ENCODE measurements at regions of chr12 and their contacts with region 1.

Region 1: DNA sequence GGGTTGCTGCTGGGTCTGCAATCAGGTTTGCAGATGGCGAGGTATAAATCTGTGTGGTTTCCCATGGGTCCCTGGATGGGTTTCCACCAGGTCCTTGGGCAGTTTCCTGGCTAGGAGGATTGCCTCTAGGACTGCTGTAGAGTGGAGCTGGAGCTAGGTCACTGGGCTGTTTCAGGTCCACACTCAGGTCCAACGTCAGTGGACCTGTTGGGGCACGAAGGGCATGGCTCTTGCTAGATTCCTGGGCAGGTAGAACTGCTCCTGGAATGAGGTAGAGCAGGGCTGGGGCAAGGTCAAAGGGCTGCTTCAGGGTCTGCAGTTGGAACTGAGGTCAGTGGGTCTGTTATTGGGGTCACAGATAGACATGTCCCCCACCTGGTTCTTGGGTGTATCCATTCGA is 317.7 kb downstream of the ETNK1 start:
- DNase-seq: no peak
- H3K4me3 ChIP-seq: no peak overlapping the region
- H3K4me3 Mint-ChIP-seq: no peak overlapping the region
- H3K27ac Mint-ChIP-seq: no peak overlapping the region
- H3K4me1 ChIP-seq: no peaks in the 10 kb centered on the region
- H3K4me1 Mint-ChIP-seq: no peaks in the 10 kb centered on the region
- H3K27me3 ChIP-seq: no peaks in the 10 kb centered on the region
- H3K27me3 Mint-ChIP-seq: peaks cover 6% of the 10 kb centered on the region
- CTCF ChIP-seq: no peak

Region 2: DNA sequence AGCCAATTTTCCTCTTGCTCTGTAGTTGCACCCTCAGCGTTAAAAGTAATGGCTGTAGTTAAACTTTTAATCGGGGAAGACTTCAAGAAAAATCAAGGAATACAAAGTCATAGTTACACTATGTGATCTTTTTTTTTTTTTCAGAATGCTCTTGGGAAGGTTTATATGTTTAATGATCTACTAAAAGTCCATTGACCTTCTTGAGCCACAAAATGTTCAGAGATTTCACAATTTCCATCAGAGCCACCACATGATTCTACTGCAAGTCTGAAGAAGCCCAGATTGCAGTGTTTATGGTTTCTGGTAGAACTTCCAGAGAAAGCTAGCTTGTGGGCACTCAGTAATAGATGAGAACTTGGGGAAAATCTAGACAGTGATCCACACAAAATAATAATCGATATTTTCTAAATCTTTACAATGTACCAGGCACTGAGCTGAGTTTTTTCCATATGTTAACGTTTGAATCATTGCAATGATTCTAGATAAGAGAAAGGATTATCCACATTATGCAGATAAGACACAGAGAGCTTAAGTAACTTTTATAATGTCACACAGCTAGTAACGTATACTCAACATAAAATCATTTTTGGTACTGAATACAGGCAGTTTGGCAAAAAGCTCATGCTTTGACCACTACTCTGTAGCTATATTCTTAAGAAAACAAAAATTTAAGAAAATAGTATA is 1376.3 kb before region 1 on chr12:
- CTCF ChIA-PET with region 1: no interaction called
- POLR2A ChIA-PET with region 1: no interaction called
- intact Hi-C with region 1: loop called (anchors 5 kb)
- DNase-seq: peak in 1 of 2 experiments; percentile 28
- H3K4me3 ChIP-seq: no peak overlapping the region
- H3K4me3 Mint-ChIP-seq: no peak overlapping the region
- H3K27ac Mint-ChIP-seq: peak overlapping the region; percentile 81
- H3K4me1 ChIP-seq: peaks cover 31% of the 10 kb centered on the region
- H3K4me1 Mint-ChIP-seq: peaks cover 46% of the 10 kb centered on the region
- H3K27me3 ChIP-seq: no peaks in the 10 kb centered on the region
- H3K27me3 Mint-ChIP-seq: no peaks in the 10 kb centered on the region
- CTCF ChIP-seq: no peak